ENCODE measurements at regions of chr11 and their contacts with region 1.

Region 1: DNA sequence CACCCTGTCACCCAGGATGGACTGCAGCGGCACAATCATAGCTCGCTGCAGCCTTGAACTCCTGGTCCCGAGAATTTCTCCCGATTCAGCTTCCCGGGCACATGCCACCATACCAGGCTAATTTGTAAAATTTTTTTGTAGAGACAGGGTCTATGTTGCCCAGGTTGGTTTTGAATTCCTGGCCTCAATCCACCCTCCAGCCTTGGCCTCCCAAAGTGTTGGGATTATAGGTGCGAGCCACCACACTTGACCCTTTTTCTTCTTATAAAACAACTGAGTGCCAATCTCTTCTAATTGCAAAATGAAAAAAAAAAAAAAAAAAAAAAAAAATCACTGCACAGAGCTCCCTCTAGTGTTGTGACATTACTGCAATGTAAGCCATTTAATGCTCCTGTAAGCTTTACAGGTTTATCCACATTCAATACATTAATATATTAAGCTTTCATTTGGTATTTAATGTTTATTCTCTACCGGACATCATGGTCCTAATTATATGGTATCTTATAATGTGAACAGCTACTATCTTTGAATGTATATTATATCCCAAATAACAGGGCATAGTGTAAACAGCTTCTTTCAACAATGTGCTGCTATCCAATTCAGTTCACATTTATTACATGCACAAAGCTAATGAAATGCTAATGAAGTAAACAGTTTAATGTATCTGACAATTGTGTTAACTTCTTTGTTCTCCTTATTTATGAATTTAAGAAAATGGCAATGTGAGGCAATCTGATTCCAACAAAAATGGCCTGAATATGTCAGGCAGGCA is 44.6 kb downstream of the COPB1 start:
- DNase-seq: peak in 4 of 5 donors; percentile 14 to 29 (median 18)
- H3K4me3 ChIP-seq: no peak overlapping the region
- H3K4me3 Mint-ChIP-seq: no peak overlapping the region
- H3K27ac ChIP-seq: no peak overlapping the region
- H3K27ac Mint-ChIP-seq: peak overlapping the region in 4 of 7 donors; percentile 22 to 63 (median 41)
- H3K4me1 ChIP-seq: no peaks in the 10 kb centered on the region
- H3K4me1 Mint-ChIP-seq: peaks cover 0 to 3% (median 1%) of the 10 kb centered on the region in 4 donors
- H3K27me3 ChIP-seq: no peaks in the 10 kb centered on the region
- H3K27me3 Mint-ChIP-seq: no peaks in the 10 kb centered on the region

Region 2: GRCh38 chr11:14300661-14301304 is 154.3 kb before region 1 on chr11:
- CTCF ChIA-PET with region 1: interaction called, 172 read pairs
- POLR2A ChIA-PET with region 1: interaction called, 9 read pairs
- intact Hi-C with region 1: loop called (anchors 1 kb)
- DNase-seq: peak in 4 of 5 donors; percentile 36 to 47 (median 44)
- H3K4me3 ChIP-seq: no peak overlapping the region
- H3K4me3 Mint-ChIP-seq: no peak overlapping the region
- H3K27ac ChIP-seq: no peak overlapping the region
- H3K27ac Mint-ChIP-seq: no peak overlapping the region
- H3K4me1 ChIP-seq: peaks cover 7% of the 10 kb centered on the region
- H3K4me1 Mint-ChIP-seq: peaks cover 0 to 10% (median 4%) of the 10 kb centered on the region in 4 donors
- H3K27me3 ChIP-seq: no peaks in the 10 kb centered on the region
- H3K27me3 Mint-ChIP-seq: no peaks in the 10 kb centered on the region

Region 3: DNA sequence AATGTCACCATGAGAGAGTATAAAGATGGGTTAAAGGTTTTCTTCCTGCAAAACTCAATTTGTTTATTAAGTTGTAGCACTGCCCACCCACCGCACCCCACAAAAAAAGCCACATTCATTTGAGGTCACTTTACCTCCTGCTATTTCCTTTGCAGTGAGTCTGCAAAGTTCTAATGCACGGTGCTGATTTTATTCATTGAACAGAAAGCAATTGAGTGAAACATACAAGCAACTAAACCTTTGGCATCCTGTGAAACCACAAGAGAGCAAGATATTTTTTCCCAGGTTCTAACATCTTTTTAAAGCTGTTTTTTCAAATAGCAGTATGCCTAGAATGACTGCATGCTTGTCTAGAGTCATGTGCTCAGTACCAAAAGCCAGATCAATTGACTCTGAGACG is 135.0 kb before region 1 on chr11:
- CTCF ChIA-PET with region 1: interaction called, 10 read pairs
- POLR2A ChIA-PET with region 1: no interaction called
- intact Hi-C with region 1: no loop called
- DNase-seq: peak; percentile 58 to 63 (median 60)
- H3K4me3 ChIP-seq: no peak overlapping the region
- H3K4me3 Mint-ChIP-seq: peak overlapping the region in 7 of 8 donors; percentile 0 to 73 (median 64)
- H3K27ac ChIP-seq: no peak overlapping the region
- H3K27ac Mint-ChIP-seq: peak overlapping the region in 5 of 7 donors; percentile 4 to 63 (median 39)
- H3K4me1 ChIP-seq: peaks cover 43% of the 10 kb centered on the region
- H3K4me1 Mint-ChIP-seq: peaks cover 32 to 76% (median 58%) of the 10 kb centered on the region in 4 donors
- H3K27me3 ChIP-seq: no peaks in the 10 kb centered on the region
- H3K27me3 Mint-ChIP-seq: no peaks in the 10 kb centered on the region

Region 4: DNA sequence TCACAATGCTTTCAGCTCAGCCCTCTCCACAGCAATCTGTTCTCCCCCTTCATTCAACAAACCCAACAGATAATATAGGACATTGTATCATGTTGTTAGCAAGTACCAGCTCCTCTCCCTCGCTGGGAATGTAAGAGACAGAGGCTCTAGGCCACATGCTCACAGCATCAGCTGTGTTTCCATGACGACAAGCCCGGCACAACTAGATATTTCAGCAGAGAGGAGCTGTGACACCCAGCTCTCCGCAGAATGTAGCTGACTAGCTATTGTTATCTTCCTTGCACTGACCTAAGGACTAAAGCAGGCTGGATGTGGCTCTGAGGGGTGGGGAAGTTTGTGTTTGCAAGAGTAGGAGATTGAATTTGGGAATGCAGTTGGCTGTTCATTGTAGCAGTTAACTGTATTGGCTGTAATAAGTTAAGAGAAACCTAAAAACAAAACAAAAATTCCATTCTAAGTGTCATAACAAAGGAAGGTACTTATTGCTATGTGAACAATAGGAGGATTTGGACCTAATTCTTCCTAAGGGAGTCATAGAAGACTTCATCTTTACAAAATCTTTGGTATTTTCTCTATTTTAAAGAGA is 68.1 kb before region 1 on chr11:
- CTCF ChIA-PET with region 1: no interaction called
- POLR2A ChIA-PET with region 1: no interaction called
- intact Hi-C with region 1: no loop called
- DNase-seq: no peak
- H3K4me3 ChIP-seq: no peak overlapping the region
- H3K4me3 Mint-ChIP-seq: no peak overlapping the region
- H3K27ac ChIP-seq: no peak overlapping the region
- H3K27ac Mint-ChIP-seq: no peak overlapping the region
- H3K4me1 ChIP-seq: no peaks in the 10 kb centered on the region
- H3K4me1 Mint-ChIP-seq: no peaks in the 10 kb centered on the region
- H3K27me3 ChIP-seq: no peaks in the 10 kb centered on the region
- H3K27me3 Mint-ChIP-seq: peaks cover 0 to under 1% of the 10 kb centered on the region in 2 donors

Region 5: GRCh38 chr11:14435717-14436512 is 19.1 kb before region 1 on chr11:
- CTCF ChIA-PET with region 1: interaction called, 12 read pairs
- POLR2A ChIA-PET with region 1: no interaction called
- intact Hi-C with region 1: no loop called
- DNase-seq: peak in 2 of 5 donors; percentile 8 to 16
- H3K4me3 ChIP-seq: no peak overlapping the region
- H3K4me3 Mint-ChIP-seq: peak overlapping the region in 3 of 8 donors; percentile 7 to 70 (median 11)
- H3K27ac ChIP-seq: no peak overlapping the region
- H3K27ac Mint-ChIP-seq: peak overlapping the region in 3 of 7 donors; percentile 13 to 58 (median 24)
- H3K4me1 ChIP-seq: peaks cover 20% of the 10 kb centered on the region
- H3K4me1 Mint-ChIP-seq: peaks cover 24 to 56% (median 30%) of the 10 kb centered on the region in 4 donors
- H3K27me3 ChIP-seq: no peaks in the 10 kb centered on the region
- H3K27me3 Mint-ChIP-seq: no peaks in the 10 kb centered on the region

Region 6: GRCh38 chr11:14471127-14471526 is 16.1 kb after region 1 on chr11:
- CTCF ChIA-PET with region 1: interaction called, 43 read pairs
- POLR2A ChIA-PET with region 1: interaction called, 3 read pairs
- intact Hi-C with region 1: no loop called
- DNase-seq: no peak
- H3K4me3 ChIP-seq: no peak overlapping the region
- H3K4me3 Mint-ChIP-seq: peak overlapping the region in 1 of 8 donors; percentile 54
- H3K27ac ChIP-seq: no peak overlapping the region
- H3K27ac Mint-ChIP-seq: peak overlapping the region in 5 of 7 donors; percentile 25 to 77 (median 67)
- H3K4me1 ChIP-seq: peaks cover 19% of the 10 kb centered on the region
- H3K4me1 Mint-ChIP-seq: peaks cover 37 to 50% (median 41%) of the 10 kb centered on the region in 4 donors
- H3K27me3 ChIP-seq: no peaks in the 10 kb centered on the region
- H3K27me3 Mint-ChIP-seq: no peaks in the 10 kb centered on the region